ENCODE measurements at regions of chr1 and their contacts with region 1.

Region 1: DNA sequence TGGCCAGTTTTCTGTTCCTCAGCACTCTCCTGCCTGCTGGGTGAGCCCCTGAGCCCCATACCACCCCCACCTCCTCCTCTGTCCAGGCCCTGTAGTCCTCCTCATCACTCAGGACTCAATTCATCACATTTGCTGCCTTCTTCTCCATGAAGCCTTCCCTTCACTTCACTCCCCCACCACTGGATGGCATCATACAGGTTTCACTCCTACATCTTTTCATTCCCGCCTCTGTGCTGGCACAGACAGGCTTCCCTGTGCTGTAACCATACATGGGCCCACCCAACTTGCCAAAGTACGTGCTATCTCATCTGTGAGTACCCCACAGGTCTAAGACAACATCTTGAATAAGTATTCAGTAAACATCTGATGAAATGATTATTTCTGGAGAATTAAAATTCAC is 56.9 kb downstream of the SLC45A1 start:
- DNase-seq: peak; percentile 74
- H3K4me3 ChIP-seq: no peak overlapping the region
- H3K27ac ChIP-seq: peak overlapping the region; percentile 76
- H3K4me1 ChIP-seq: peaks cover 76% of the 10 kb centered on the region
- H3K27me3 ChIP-seq: no peaks in the 10 kb centered on the region
- CTCF ChIP-seq: peak; percentile 66

Region 2: DNA sequence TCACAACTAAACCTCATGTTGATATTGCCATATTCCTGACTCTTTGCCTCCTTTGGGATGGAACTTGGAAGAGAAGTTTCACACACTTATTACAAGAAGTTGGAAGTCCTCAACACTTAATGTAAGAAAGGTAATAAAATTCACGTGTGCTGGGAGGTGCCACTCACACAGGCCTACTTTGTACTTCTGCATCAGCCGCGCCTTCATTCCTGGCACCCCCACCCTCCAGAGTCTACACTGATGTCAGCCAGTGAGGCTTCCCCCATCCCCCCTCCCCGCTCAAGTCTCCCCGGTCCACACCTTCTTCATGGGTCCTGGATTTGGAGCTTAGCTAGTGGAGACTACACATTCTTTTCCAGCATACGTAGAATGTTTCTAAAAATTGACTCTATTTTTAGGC is 81.7 kb before region 1 on chr1:
- CTCF ChIA-PET with region 1: no interaction called
- POLR2A ChIA-PET with region 1: no interaction called
- intact Hi-C with region 1: no loop called
- DNase-seq: no peak
- H3K4me3 ChIP-seq: no peak overlapping the region
- H3K27ac ChIP-seq: no peak overlapping the region
- H3K4me1 ChIP-seq: peaks cover 10% of the 10 kb centered on the region
- H3K27me3 ChIP-seq: no peaks in the 10 kb centered on the region
- CTCF ChIP-seq: no peak

Region 3: GRCh38 chr1:8423650-8424538 is 49.1 kb after region 1 on chr1:
- CTCF ChIA-PET with region 1: no interaction called
- POLR2A ChIA-PET with region 1: no interaction called
- intact Hi-C with region 1: loop called (anchors 2 kb)
- DNase-seq: peak; percentile 85
- H3K4me3 ChIP-seq: peak overlapping the region; percentile 79
- H3K27ac ChIP-seq: peak overlapping the region; percentile 87
- H3K4me1 ChIP-seq: peaks cover 43% of the 10 kb centered on the region
- H3K27me3 ChIP-seq: no peaks in the 10 kb centered on the region
- CTCF ChIP-seq: no peak

Region 4: GRCh38 chr1:8560611-8561544 is 186.1 kb after region 1 on chr1:
- CTCF ChIA-PET with region 1: no interaction called
- POLR2A ChIA-PET with region 1: no interaction called
- intact Hi-C with region 1: no loop called
- DNase-seq: peak; percentile 76
- H3K4me3 ChIP-seq: no peak overlapping the region
- H3K27ac ChIP-seq: peak overlapping the region; percentile 75
- H3K4me1 ChIP-seq: peaks cover 72% of the 10 kb centered on the region
- H3K27me3 ChIP-seq: no peaks in the 10 kb centered on the region
- CTCF ChIP-seq: peak; percentile 93

Region 5: DNA sequence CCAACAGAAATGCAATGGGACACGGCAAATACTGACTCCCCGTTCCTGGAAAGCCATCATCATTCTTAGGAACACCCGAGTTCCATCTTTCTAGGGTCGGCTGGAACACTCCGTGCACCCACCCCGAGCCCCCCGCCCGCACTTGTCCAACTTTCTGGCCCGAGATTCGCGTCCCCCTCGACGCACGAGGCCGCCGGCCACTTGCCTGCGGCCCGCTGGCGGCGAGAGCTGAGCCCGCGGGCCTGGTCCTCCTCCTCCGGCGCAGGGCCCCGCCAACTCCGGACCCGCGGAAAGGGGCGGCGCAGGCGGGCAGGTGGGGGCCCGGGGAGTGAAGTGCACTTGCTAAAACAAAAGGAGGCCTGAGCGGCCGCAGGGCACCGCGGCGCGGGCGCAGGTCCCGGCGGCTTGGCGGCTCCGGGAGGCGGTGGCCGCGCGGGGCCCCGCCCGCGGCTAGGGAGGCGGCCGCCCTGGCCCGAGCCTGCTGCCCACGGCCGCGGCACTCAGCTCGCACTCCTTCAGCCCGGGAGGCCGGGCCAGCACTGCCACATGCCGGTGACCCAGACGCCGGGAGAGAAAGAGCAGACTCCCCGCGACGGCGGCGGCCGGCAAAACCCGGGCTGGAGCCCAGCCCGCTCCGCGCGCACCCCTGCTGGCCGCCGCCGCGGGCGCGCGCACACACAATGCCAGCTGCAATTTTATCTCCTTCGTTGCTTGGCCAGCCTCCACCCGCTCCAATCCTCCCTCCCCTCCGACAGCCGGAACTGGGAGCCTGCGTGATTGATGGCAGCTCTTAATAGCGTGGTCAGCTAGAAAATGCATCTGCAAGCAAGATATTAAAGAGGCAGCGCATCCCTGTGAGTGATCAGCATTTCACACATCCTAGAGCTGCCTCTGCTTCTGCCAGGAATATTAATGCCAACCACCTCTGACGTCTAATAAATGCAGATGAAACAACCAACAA is 328.3 kb after region 1 on chr1:
- CTCF ChIA-PET with region 1: no interaction called
- POLR2A ChIA-PET with region 1: no interaction called
- intact Hi-C with region 1: loop called (anchors 10 kb)
- DNase-seq: peak; percentile 98
- H3K4me3 ChIP-seq: peak overlapping the region; percentile 72
- H3K27ac ChIP-seq: peak overlapping the region; percentile 95
- H3K4me1 ChIP-seq: peaks cover 64% of the 10 kb centered on the region
- H3K27me3 ChIP-seq: no peaks in the 10 kb centered on the region
- CTCF ChIP-seq: no peak

Measured in A673 (cell line).